Body of pancreas (tissue), 4 donors: ENCODE measurements at regions of chr9 and their contacts with region 1.

Region 1: DNA sequence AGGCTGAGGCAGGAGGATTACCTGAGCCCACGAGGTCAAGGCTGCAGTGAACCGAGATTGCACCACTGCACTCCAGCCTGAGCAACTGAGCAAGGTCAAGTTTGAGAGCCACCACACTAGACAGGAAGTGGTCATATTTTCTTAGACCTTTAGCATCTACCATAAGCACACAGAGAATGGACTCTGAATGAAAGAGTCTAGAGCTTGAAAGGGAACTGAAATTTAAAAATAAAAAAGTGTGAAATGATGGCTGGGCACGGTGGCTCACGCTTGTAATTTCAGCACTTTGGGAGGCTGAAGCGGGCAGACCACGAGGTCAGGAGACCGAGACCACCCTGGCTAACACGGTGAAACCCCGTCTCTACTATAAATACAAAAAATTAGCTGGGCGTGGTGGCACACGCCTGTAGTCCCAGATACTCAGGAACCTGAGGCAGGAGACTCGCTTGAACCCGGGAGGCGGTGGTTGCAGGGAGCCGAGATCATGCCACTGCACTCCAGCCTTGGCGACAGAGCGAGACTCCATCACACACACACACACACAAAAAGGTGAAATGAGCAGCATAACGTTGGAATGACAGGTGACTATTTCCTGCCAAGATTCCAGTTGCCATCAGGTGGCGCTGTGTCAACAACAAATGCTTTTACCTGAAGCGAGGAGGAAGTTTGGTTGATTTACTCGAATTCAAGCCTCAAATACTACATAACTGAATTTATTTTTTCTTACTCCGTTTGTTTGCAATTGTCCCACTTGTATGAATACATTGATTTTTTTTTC is 21.3 kb upstream of the AK3 start:
- DNase-seq: peak; percentile 82 to 90 (median 86)
- ATAC-seq: peak; percentile 87
- H3K4me3 ChIP-seq: no peak overlapping the region
- H3K27ac ChIP-seq: peak overlapping the region in 3 of 4 donors; percentile 3 to 75 (median 32)
- H3K4me1 ChIP-seq: peaks cover 12% of the 10 kb centered on the region
- H3K27me3 ChIP-seq: no peaks in the 10 kb centered on the region
- CTCF ChIP-seq: peak; percentile 69 to 96 (median 91)
- POLR2A ChIP-seq: no peak

Region 2: DNA sequence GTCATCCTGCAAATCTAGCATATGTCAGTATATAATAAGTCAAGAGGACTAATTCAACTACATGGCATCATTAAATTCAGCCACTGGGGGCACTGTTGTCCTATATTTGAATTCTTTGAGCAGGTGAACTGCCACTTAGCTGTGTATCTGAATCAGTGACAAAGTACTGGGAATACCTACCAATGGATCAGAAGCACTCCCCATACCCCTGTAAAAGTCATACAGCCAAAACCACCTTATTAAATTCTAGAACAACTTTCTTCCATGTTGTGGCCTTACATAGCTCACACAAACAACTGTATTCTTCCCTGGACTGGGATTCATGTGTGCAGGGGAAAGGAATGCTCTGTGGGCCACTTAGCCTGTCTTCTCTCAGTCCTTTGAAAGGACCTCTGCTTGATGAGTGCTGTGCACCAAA is 157.6 kb before region 1 on chr9:
- intact Hi-C with region 1: no loop called
- DNase-seq: peak; percentile 80 to 87 (median 83)
- ATAC-seq: peak; percentile 90
- H3K4me3 ChIP-seq: no peak overlapping the region
- H3K27ac ChIP-seq: no peak overlapping the region
- H3K4me1 ChIP-seq: no peaks in the 10 kb centered on the region
- H3K27me3 ChIP-seq: no peaks in the 10 kb centered on the region
- CTCF ChIP-seq: peak; percentile 29 to 85 (median 82)
- POLR2A ChIP-seq: no peak

Region 3: GRCh38 chr9:4792572-4793458 is 30.5 kb after region 1 on chr9 and contains the start of gene RCL1:
- intact Hi-C with region 1: no loop called
- DNase-seq: peak; percentile 95 to 97 (median 95)
- ATAC-seq: peak; percentile 98
- H3K4me3 ChIP-seq: peak within 1 kb of the TSS; percentile 72 to 97
- H3K27ac ChIP-seq: peak within 1 kb of the TSS; percentile 80 to 95 (median 86)
- H3K4me1 ChIP-seq: peaks cover 31% of the 10 kb centered on the region
- H3K27me3 ChIP-seq: no peaks in the 10 kb centered on the region
- CTCF ChIP-seq: no peak
- POLR2A ChIP-seq: peak; percentile 85 to 92 (median 89)
- total RNA-seq, gene RCL1: 27.0 to 49.4 TPM

Region 4: GRCh38 chr9:4994166-4994890 is 232.0 kb after region 1 on chr9:
- intact Hi-C with region 1: loop called (anchors 10 kb)
- DNase-seq: no peak
- ATAC-seq: no peak
- H3K4me3 ChIP-seq: no peak overlapping the region
- H3K27ac ChIP-seq: no peak overlapping the region
- H3K4me1 ChIP-seq: peaks cover 17% of the 10 kb centered on the region
- H3K27me3 ChIP-seq: no peaks in the 10 kb centered on the region
- CTCF ChIP-seq: no peak
- POLR2A ChIP-seq: no peak